Esophagus muscularis mucosa (tissue), 4 donors: ENCODE measurements at regions of chr17 and their contacts with region 1.

Region 1: DNA sequence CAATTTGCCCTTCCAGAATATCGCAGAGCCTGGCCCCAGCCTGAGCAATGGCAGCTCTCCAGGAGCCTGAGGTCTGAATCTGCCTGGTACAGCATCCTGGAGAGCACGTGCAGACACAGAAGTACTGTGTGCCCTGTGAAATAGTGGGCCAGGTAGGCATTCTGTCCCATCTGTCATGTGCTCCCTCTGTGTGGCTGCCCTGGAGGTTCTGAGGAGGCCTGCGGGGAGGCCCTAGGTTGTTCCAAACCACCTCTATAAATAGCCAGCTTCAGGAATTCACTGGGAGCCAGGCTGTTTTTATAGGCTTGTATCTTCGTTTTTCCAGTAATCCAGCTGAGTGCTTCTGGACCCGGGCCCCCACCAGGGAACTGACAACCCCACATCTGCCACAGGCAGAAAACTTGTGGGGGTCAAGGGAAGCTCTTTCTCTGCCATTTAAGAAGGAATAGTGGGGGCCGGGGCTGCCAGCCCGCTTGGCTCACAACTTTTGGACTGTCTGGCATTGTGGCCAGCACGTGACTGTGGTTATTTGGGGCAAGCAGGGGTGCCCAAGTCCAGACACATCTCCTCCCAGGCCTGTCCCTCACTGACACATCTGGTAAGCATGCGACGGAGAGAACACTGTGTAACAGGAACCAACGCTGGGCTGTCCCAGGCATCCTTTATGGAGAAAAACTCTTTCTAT is 356.3 kb upstream of the TNRC6C start:
- DNase-seq: no peak
- H3K4me3 ChIP-seq: no peak overlapping the region
- H3K27ac ChIP-seq: peak overlapping the region; percentile 88 to 92 (median 90)
- H3K4me1 ChIP-seq: peaks cover 31 to 61% (median 46%) of the 10 kb centered on the region in 4 donors
- H3K27me3 ChIP-seq: no peaks in the 10 kb centered on the region
- CTCF ChIP-seq: no peak
- EP300 ChIP-seq: peak; percentile 84
- POLR2A ChIP-seq: no peak

Region 2: GRCh38 chr17:77297693-77298666 is 304.2 kb before region 1 on chr17:
- intact Hi-C with region 1: no loop called
- DNase-seq: no peak
- H3K4me3 ChIP-seq: no peak overlapping the region
- H3K27ac ChIP-seq: no peak overlapping the region
- H3K4me1 ChIP-seq: no peaks in the 10 kb centered on the region
- H3K27me3 ChIP-seq: no peaks in the 10 kb centered on the region
- CTCF ChIP-seq: no peak
- EP300 ChIP-seq: no peak
- POLR2A ChIP-seq: no peak

Region 3: GRCh38 chr17:77734341-77735080 is 132.3 kb after region 1 on chr17:
- intact Hi-C with region 1: loop called (anchors 5 kb)
- DNase-seq: peak; percentile 97
- H3K4me3 ChIP-seq: peak overlapping the region; percentile 30 to 40 (median 36)
- H3K27ac ChIP-seq: peak overlapping the region; percentile 82 to 90 (median 88)
- H3K4me1 ChIP-seq: peaks cover 44 to 58% (median 56%) of the 10 kb centered on the region in 4 donors
- H3K27me3 ChIP-seq: no peaks in the 10 kb centered on the region
- CTCF ChIP-seq: peak; percentile 33 to 45 (median 40)
- EP300 ChIP-seq: no peak
- POLR2A ChIP-seq: no peak